Caco-2 (cell line): ENCODE measurements at regions of chr10 and their contacts with region 1.

Region 1: DNA sequence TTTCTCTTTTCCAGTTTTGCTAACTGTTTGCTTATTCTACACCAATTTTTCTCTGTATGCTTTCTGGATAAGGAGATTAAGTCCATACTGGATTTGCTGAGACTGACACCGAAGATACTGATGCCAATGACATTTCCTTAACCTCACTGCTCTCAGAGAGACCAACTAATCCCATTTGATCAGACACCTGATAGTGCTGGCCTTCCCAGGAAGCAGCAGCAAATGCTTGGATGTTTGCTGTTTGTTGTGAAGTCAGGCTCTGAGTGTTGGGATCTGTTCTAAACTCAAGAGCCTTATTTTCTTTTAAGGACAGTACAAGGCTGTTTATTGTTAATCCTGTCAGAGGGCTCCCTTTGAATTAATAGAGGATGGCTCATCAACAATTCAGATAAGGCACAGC is 143.3 kb downstream of the ANK3 start:
- DNase-seq: no peak
- H3K4me3 ChIP-seq: no peak overlapping the region
- H3K4me3 Mint-ChIP-seq: no peak overlapping the region
- H3K27ac Mint-ChIP-seq: no peak overlapping the region
- H3K4me1 ChIP-seq: peaks cover 7% of the 10 kb centered on the region; the same call in 1 of the 2 replicates
- H3K4me1 Mint-ChIP-seq: no peaks in the 10 kb centered on the region
- H3K27me3 ChIP-seq: no peaks in the 10 kb centered on the region
- H3K27me3 Mint-ChIP-seq: no peaks in the 10 kb centered on the region
- CTCF ChIP-seq: no peak

Region 2: DNA sequence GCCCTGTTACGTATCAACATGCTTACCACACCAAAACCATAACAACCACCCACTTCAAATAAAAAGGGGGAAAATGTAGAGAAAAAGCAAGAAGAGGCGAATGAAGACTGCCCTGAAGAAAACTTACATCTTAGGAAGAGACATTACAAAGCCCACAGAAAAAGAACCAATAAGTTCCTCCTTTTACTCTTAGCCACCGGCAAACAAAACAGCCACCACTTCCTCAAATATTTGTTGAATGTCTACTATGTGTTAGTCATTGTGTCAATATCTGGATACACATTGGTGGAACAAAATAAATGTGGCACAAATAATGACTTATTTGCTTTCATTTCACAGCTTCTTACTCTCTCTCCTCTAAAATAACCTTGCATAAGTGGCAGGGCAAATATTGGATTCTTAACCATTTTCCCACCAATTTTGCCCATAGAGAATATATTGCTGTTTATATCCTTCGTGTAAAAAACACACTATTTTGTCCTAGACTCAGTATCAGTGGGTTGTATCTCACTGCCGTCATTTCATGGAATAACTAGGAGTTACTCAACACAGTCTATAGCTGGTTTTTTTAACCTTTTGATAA is 36.5 kb after region 1 on chr10:
- CTCF ChIA-PET with region 1: no interaction called
- POLR2A ChIA-PET with region 1: no interaction called
- intact Hi-C with region 1: no loop called
- DNase-seq: peak in 1 of 2 experiments; percentile 68
- H3K4me3 ChIP-seq: no peak overlapping the region
- H3K4me3 Mint-ChIP-seq: peak overlapping the region; percentile 33
- H3K27ac Mint-ChIP-seq: peak overlapping the region; percentile 68
- H3K4me1 ChIP-seq: peaks cover 42% of the 10 kb centered on the region
- H3K4me1 Mint-ChIP-seq: peaks cover 35% of the 10 kb centered on the region
- H3K27me3 ChIP-seq: no peaks in the 10 kb centered on the region
- H3K27me3 Mint-ChIP-seq: no peaks in the 10 kb centered on the region
- CTCF ChIP-seq: no peak

Region 3: GRCh38 chr10:60425392-60426110 is 179.2 kb after region 1 on chr10:
- CTCF ChIA-PET with region 1: no interaction called
- POLR2A ChIA-PET with region 1: interaction called, 13 read pairs
- intact Hi-C with region 1: no loop called
- DNase-seq: no peak
- H3K4me3 ChIP-seq: no peak overlapping the region
- H3K4me3 Mint-ChIP-seq: no peak overlapping the region
- H3K27ac Mint-ChIP-seq: no peak overlapping the region
- H3K4me1 ChIP-seq: peaks cover 15% of the 10 kb centered on the region
- H3K4me1 Mint-ChIP-seq: peaks cover 36% of the 10 kb centered on the region
- H3K27me3 ChIP-seq: no peaks in the 10 kb centered on the region
- H3K27me3 Mint-ChIP-seq: no peaks in the 10 kb centered on the region
- CTCF ChIP-seq: no peak